ENCODE measurements at regions of chr3 and their contacts with region 1.

Region 1: GRCh38 chr3:119322835-119323722 is 28.9 kb downstream of the ARHGAP31 start:
- H3K4me3 Mint-ChIP-seq: peak overlapping the region; percentile 86
- H3K27ac Mint-ChIP-seq: peak overlapping the region; percentile 97
- H3K4me1 Mint-ChIP-seq: peaks cover 80% of the 10 kb centered on the region
- H3K27me3 Mint-ChIP-seq: no peaks in the 10 kb centered on the region

Region 2: DNA sequence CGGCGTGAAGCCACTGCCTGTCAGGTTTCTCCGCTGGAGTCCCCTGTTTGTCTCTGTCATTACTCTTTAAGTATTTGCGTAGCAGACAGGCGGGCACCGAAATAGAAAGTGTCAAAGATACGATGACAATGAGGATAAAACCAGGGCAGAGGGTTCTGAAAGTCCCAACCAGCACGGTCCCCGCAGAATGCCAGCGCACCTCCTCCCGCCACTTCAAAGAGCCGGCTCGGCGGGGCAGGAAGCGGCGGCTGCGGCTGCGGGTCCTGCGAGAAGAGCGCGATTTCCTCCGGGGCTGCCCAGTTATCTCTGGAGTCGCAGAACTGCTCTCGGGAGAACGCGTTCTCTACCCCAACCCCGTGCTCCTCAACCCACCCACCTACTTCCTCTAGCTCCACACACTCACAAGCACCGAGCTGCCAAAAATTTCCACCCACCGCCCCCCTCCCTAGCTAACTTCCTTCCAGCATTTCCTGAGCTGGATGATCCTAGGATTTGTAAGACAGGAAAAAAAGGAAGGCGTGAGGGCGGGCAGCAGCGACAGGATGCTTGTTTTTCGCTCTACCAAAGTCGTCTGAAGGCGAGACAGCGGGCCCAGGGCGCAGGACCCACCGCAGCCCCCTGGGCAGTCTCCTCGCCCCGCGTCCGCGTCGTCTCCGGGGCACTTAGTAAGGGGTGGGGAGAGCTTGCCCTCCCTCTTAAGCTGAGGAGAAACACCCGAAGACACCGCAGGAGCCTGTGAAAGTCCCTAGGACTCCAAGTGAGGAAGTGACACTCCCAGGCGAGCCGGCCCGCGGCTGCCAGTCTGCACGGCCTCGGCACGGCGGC is 29.0 kb before region 1 on chr3 and contains the start of gene ARHGAP31:
- intact Hi-C with region 1: loop called (anchors 1 kb)
- H3K4me3 Mint-ChIP-seq: peak within 1 kb of the TSS; percentile 82
- H3K27ac Mint-ChIP-seq: peak within 1 kb of the TSS; percentile 94
- H3K4me1 Mint-ChIP-seq: peaks cover 55% of the 10 kb centered on the region
- H3K27me3 Mint-ChIP-seq: peaks cover 2% of the 10 kb centered on the region

Region 3: GRCh38 chr3:119302697-119303551 is 20.2 kb before region 1 on chr3:
- intact Hi-C with region 1: loop called (anchors 2 kb)
- H3K4me3 Mint-ChIP-seq: peak overlapping the region; percentile 70
- H3K27ac Mint-ChIP-seq: peak overlapping the region; percentile 93
- H3K4me1 Mint-ChIP-seq: peaks cover 73% of the 10 kb centered on the region
- H3K27me3 Mint-ChIP-seq: no peaks in the 10 kb centered on the region

Region 4: DNA sequence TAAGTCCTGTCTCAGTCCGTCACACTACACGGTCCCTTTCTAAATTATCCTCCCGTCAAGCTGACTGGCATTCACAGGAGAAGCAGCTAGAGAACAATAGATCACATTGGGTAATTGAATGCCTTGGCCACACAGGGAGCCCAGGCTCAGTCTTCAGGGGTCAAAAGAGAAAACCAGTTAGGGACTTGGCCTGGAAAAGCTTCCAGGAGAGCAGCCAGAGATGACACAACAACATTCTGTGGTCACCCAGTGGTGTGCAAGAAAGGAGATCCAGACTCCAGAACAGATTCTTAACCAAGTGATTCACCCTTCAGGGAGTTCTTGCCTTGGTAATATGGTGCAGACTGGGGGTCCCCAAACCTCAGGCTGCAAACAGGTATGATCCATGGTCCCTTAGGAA is 13.0 kb before region 1 on chr3:
- intact Hi-C with region 1: loop called (anchors 2 kb)
- H3K4me3 Mint-ChIP-seq: peak overlapping the region; percentile 37
- H3K27ac Mint-ChIP-seq: peak overlapping the region; percentile 62
- H3K4me1 Mint-ChIP-seq: peaks cover 70% of the 10 kb centered on the region
- H3K27me3 Mint-ChIP-seq: no peaks in the 10 kb centered on the region